K562 (cell line): ENCODE measurements at regions of chr10 and their contacts with region 1.

Region 1: DNA sequence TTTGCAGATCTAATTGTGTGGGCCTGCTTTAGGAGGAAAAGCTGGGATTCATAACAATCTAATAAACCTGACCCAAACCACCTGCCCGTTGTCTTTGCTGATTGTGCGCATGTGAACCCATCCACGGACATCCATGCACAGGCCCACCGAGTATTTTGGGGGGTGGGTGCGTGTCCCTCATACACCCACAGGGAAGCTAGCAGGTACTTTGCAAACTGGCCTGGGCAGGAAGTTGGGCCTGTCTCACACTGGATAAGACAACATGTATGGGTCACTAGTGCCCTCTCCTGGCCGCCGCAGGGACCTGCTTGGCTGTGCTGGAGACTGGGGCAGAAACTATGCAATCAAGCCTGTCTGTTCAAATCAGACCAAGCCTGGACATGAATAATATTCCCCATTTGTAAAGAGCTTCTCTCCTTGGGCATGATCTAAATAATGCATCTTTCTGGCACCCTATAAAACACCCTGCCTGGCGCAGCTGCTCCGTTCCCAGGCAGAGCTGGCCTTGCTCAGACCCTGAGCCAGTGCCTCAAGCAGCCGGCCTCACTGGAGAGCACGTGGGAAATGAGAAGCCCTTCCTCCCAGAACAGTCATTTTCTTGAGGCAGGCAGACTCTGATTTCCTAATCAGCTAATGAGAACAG is 15.8 kb downstream of the ECHDC3 start:
- DNase-seq: peak; percentile 79 to 89 (median 82)
- ATAC-seq: peak; percentile 98
- H3K4me3 ChIP-seq: no peak overlapping the region
- H3K27ac ChIP-seq: no peak overlapping the region
- H3K4me1 ChIP-seq: peaks cover 4 to 7% of the 10 kb centered on the region in 2 experiments; a peak in 4 of 5 replicates
- H3K27me3 ChIP-seq: no peaks in the 10 kb centered on the region
- CTCF ChIP-seq: peak; percentile 90 to 96 (median 94)
- EP300 ChIP-seq: no peak
- POLR2A ChIP-seq: no peak
- RAD21 ChIP-seq: peak; percentile 93 to 94

Region 2: GRCh38 chr10:10911471-10911921 is 846.4 kb before region 1 on chr10:
- CTCF ChIA-PET with region 1: no interaction called
- POLR2A ChIA-PET with region 1: no interaction called
- in situ Hi-C with region 1: loop called (anchors 25 kb)
- intact Hi-C with region 1: no loop called
- DNase-seq: no peak
- ATAC-seq: no peak
- H3K4me3 ChIP-seq: no peak overlapping the region
- H3K27ac ChIP-seq: no peak overlapping the region
- H3K4me1 ChIP-seq: no peaks in the 10 kb centered on the region
- H3K27me3 ChIP-seq: peaks cover 0 to 5% of the 10 kb centered on the region in 2 experiments; a peak in 1 of 5 replicates
- CTCF ChIP-seq: no peak
- EP300 ChIP-seq: no peak
- POLR2A ChIP-seq: no peak
- RAD21 ChIP-seq: no peak

Region 3: DNA sequence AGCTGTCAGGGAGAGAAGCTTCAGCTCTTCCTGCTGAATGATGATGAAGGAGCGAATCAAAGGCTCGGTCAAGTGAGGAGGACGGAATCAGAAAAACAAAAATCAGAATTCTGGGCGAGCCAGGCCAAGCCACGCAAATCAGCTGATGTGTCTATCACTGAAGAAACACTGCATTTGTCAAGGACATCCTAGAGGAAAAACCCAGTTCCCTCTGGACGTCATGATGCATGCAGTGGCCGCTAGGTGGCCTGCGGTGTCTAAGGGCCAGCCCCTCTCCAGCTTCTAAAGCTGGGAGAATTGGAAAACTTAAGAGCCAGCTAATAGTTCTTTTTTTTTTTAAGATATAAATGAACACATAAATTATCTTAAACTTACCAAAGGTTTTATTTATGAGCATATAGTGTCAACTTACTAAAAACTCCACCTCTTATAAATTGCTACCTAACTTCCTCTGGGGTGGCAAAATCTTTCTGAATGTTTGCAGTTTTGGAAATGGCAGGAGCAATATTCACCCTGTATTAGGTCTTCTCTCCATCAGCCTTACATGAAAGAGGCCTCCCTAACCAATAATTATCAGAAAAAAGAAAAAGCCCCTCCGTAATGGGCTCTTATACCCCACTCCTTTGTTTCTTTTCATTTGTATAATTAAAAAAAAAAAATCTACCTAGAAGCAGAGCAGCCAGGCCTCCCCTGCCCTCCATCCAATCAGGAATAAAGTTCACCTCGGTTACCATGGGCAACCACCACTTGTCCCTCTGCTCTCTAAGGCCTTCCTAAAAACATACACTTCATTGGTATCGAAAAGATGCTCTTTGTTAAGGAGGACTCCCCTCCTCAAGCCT is 333.3 kb before region 1 on chr10:
- CTCF ChIA-PET with region 1: interaction called, 3 read pairs
- POLR2A ChIA-PET with region 1: no interaction called
- in situ Hi-C with region 1: loop called (anchors 10 kb)
- intact Hi-C with region 1: no loop called
- DNase-seq: peak; percentile 72 to 81 (median 76)
- ATAC-seq: peak; percentile 96
- H3K4me3 ChIP-seq: no peak overlapping the region
- H3K27ac ChIP-seq: no peak overlapping the region
- H3K4me1 ChIP-seq: no peaks in the 10 kb centered on the region
- H3K27me3 ChIP-seq: peaks cover 0 to 9% of the 10 kb centered on the region in 2 experiments; a peak in 1 of 5 replicates
- CTCF ChIP-seq: peak; percentile 82 to 91 (median 88)
- EP300 ChIP-seq: no peak
- POLR2A ChIP-seq: no peak
- RAD21 ChIP-seq: peak; percentile 37 to 77

Region 4: DNA sequence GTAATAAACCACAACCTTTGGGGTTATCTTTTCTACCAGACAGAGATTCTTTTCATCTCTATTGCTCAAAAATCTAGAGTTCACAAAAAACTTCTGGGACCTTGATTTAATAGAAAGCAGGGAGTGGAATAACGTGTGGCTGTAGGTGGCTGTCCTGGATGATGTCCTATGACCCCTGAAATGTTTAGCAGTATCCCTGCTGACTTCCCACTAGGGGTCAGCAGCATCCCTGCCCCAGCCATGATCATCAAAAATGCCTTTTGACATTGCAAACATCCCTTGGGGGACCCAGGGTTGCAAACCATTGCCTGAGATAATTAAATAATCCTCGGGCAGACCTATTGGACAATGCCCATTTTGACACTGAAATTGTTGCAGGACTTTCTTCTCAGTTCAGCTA is 323.6 kb before region 1 on chr10:
- CTCF ChIA-PET with region 1: no interaction called
- POLR2A ChIA-PET with region 1: no interaction called
- in situ Hi-C with region 1: loop called (anchors 10 kb)
- intact Hi-C with region 1: loop called (anchors 5 kb)
- DNase-seq: peak; percentile 51 to 70 (median 60)
- ATAC-seq: peak; percentile 85
- H3K4me3 ChIP-seq: no peak overlapping the region
- H3K27ac ChIP-seq: no peak overlapping the region
- H3K4me1 ChIP-seq: peaks cover 0 to 10% of the 10 kb centered on the region in 2 experiments; a peak in 2 of 5 replicates
- H3K27me3 ChIP-seq: peaks cover 7 to 30% of the 10 kb centered on the region in 2 experiments; a peak in 3 of 5 replicates
- CTCF ChIP-seq: peak; percentile 67 to 79 (median 72)
- EP300 ChIP-seq: no peak
- POLR2A ChIP-seq: no peak
- RAD21 ChIP-seq: peak; percentile 43 to 85

Region 5: GRCh38 chr10:11515596-11516430 is 242.1 kb before region 1 on chr10:
- CTCF ChIA-PET with region 1: interaction called, 47 read pairs
- POLR2A ChIA-PET with region 1: interaction called, 4 read pairs
- in situ Hi-C with region 1: loop called (anchors 5 kb)
- intact Hi-C with region 1: loop called (anchors 1 kb)
- DNase-seq: peak; percentile 47 to 78 (median 56)
- ATAC-seq: peak; percentile 93
- H3K4me3 ChIP-seq: no peak overlapping the region
- H3K27ac ChIP-seq: peak overlapping the region; percentile 41; the same call in 2 of the 3 replicates
- H3K4me1 ChIP-seq: peaks cover 0 to 9% of the 10 kb centered on the region in 2 experiments; a peak in 2 of 5 replicates
- H3K27me3 ChIP-seq: no peaks in the 10 kb centered on the region
- CTCF ChIP-seq: peak; percentile 67 to 91 (median 84)
- EP300 ChIP-seq: no peak
- POLR2A ChIP-seq: no peak
- RAD21 ChIP-seq: peak; percentile 97 to 98

Region 6: GRCh38 chr10:11631890-11632587 is 125.9 kb before region 1 on chr10:
- CTCF ChIA-PET with region 1: no interaction called
- POLR2A ChIA-PET with region 1: no interaction called
- in situ Hi-C with region 1: no loop called
- intact Hi-C with region 1: no loop called
- DNase-seq: no peak
- ATAC-seq: no peak
- H3K4me3 ChIP-seq: no peak overlapping the region
- H3K27ac ChIP-seq: no peak overlapping the region
- H3K4me1 ChIP-seq: no peaks in the 10 kb centered on the region
- H3K27me3 ChIP-seq: no peaks in the 10 kb centered on the region
- CTCF ChIP-seq: no peak
- EP300 ChIP-seq: no peak
- POLR2A ChIP-seq: no peak
- RAD21 ChIP-seq: no peak

Region 7: GRCh38 chr10:11724938-11725776 is 32.8 kb before region 1 on chr10:
- CTCF ChIA-PET with region 1: no interaction called
- POLR2A ChIA-PET with region 1: no interaction called
- in situ Hi-C with region 1: no loop called
- intact Hi-C with region 1: loop called (anchors 1 kb)
- DNase-seq: peak; percentile 27 to 81 (median 60)
- ATAC-seq: peak; percentile 96
- H3K4me3 ChIP-seq: no peak overlapping the region
- H3K27ac ChIP-seq: no peak overlapping the region
- H3K4me1 ChIP-seq: peaks cover 0 to 5% of the 10 kb centered on the region in 2 experiments; a peak in 4 of 5 replicates
- H3K27me3 ChIP-seq: no peaks in the 10 kb centered on the region
- CTCF ChIP-seq: peak; percentile 78 to 94 (median 86)
- EP300 ChIP-seq: 0 out of 2 replicates have a peak, but pooled peaks have one; percentile 21
- POLR2A ChIP-seq: no peak
- RAD21 ChIP-seq: peak; percentile 99 to 100

Region 8: GRCh38 chr10:11746883-11747539 is 10.9 kb before region 1 on chr10:
- CTCF ChIA-PET with region 1: no interaction called
- POLR2A ChIA-PET with region 1: interaction called, 11 read pairs
- in situ Hi-C with region 1: no loop called
- intact Hi-C with region 1: no loop called
- DNase-seq: no peak
- ATAC-seq: no peak
- H3K4me3 ChIP-seq: no peak overlapping the region
- H3K27ac ChIP-seq: no peak overlapping the region
- H3K4me1 ChIP-seq: peaks cover 0 to 11% of the 10 kb centered on the region in 2 experiments; a peak in 4 of 5 replicates
- H3K27me3 ChIP-seq: no peaks in the 10 kb centered on the region
- CTCF ChIP-seq: no peak
- EP300 ChIP-seq: no peak
- POLR2A ChIP-seq: no peak
- RAD21 ChIP-seq: no peak

Region 9: DNA sequence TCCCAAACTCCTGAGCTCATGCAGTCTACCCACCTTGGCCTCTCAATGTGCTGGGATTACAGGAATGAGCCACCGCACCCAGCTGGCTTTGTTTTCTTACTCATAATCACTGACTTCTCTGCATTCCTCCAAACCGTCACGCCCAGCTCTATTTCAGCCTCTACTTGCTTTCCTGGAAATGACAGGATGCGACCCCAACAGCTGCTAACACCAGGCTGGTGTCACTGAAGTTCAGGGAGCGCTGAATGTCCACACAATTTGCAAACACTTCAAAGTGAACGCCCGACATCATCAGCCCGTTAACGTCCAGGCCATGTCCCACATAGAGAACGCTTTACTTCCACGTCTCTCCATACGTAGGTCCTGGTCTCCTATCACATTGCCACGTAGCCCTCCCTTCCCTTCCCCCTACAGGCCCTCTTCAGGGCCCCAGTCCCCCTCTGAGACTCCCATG is 52.4 kb after region 1 on chr10:
- CTCF ChIA-PET with region 1: no interaction called
- POLR2A ChIA-PET with region 1: no interaction called
- in situ Hi-C with region 1: no loop called
- intact Hi-C with region 1: no loop called
- DNase-seq: no peak
- ATAC-seq: no peak
- H3K4me3 ChIP-seq: no peak overlapping the region
- H3K27ac ChIP-seq: no peak overlapping the region
- H3K4me1 ChIP-seq: no peaks in the 10 kb centered on the region
- H3K27me3 ChIP-seq: peaks cover 55 to 61% of the 10 kb centered on the region in 2 experiments
- CTCF ChIP-seq: no peak
- EP300 ChIP-seq: no peak
- POLR2A ChIP-seq: no peak
- RAD21 ChIP-seq: no peak

Region 10: GRCh38 chr10:11823122-11823988 is 65.4 kb after region 1 on chr10 and contains the start of gene PROSER2:
- CTCF ChIA-PET with region 1: no interaction called
- POLR2A ChIA-PET with region 1: no interaction called
- in situ Hi-C with region 1: no loop called
- intact Hi-C with region 1: no loop called
- DNase-seq: peak; percentile 81 to 85 (median 82)
- ATAC-seq: peak; percentile 87
- H3K4me3 ChIP-seq: peak within 1 kb of the TSS; percentile 68
- H3K27ac ChIP-seq: peak within 1 kb of the TSS; percentile 54; the same call in 2 of the 3 replicates
- H3K4me1 ChIP-seq: peaks cover 14 to 18% of the 10 kb centered on the region in 2 experiments; a peak in 4 of 5 replicates
- H3K27me3 ChIP-seq: no peaks in the 10 kb centered on the region
- CTCF ChIP-seq: 0 out of 6 replicates have a peak, but pooled peaks of 1 of the 3 experiments have one; percentile 13
- EP300 ChIP-seq: no peak
- POLR2A ChIP-seq: peak; percentile 76
- RAD21 ChIP-seq: no peak
- polyA plus RNA-seq, gene PROSER2: 0.62 to 1.3 TPM